Uterus (tissue), 4 donors: ENCODE measurements at regions of chr17 and their contacts with region 1.

Region 1: GRCh38 chr17:11564589-11565380 is 33.5 kb upstream of the DNAH9 start:
- DNase-seq: no peak
- H3K4me3 ChIP-seq: no peak overlapping the region
- H3K27ac ChIP-seq: no peak overlapping the region
- H3K4me1 ChIP-seq: no peaks in the 10 kb centered on the region
- H3K27me3 ChIP-seq: no peaks in the 10 kb centered on the region
- CTCF ChIP-seq: no peak
- POLR2A ChIP-seq: no peak

Region 2: DNA sequence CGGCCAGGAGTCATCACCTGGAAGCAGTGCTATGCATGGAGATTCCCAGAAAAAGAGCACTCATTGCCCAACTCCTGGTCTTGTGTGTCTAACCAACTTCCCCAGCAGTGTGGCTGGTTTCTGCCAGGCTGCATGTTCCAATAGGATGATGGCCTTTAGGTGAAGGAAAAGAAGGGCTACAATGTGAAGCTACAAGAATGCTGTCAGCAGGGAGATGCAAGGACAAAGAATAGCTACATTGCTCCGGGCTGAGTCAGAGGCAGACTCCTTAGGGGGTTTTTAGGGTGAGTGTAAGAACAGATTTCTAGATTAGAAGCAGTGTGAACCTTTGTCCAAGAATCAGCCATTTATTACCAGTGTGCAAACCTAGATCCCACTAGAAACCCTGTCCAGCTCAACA is 29.6 kb before region 1 on chr17:
- intact Hi-C with region 1: no loop called
- DNase-seq: no peak
- H3K4me3 ChIP-seq: no peak overlapping the region
- H3K27ac ChIP-seq: no peak overlapping the region
- H3K4me1 ChIP-seq: no peaks in the 10 kb centered on the region
- H3K27me3 ChIP-seq: no peaks in the 10 kb centered on the region
- CTCF ChIP-seq: no peak
- POLR2A ChIP-seq: no peak

Region 3: DNA sequence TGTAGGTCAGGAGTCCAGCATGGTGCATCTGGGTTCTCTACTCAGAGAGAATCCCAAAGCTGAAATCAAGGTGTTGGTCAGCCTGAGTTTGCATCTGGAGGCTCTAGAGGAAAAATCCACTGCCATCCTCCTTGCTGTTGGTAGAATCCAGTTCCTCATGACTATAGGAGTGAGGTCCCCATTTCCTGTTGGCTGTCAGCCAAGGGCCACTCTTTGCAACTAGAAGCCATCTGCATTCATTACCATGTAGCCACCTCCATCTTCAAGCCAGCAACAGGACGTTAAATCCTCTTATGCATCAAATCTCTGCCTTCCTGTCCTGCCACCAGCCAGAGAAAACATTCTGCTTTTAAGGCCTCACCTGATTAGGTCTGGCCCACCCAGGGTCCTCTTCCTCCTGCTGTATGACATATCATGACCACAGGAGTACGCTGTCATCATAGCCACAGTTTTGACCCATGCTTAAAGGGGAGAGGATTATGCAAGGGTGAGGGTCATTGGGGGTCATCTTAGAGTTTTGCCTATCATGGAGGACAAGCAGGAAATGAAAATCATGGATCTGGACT is 74.0 kb after region 1 on chr17:
- intact Hi-C with region 1: loop called (anchors 10 kb)
- DNase-seq: no peak
- H3K4me3 ChIP-seq: no peak overlapping the region
- H3K27ac ChIP-seq: no peak overlapping the region
- H3K4me1 ChIP-seq: no peaks in the 10 kb centered on the region
- H3K27me3 ChIP-seq: no peaks in the 10 kb centered on the region
- CTCF ChIP-seq: no peak
- POLR2A ChIP-seq: no peak

Region 4: GRCh38 chr17:11925262-11926021 is 360.7 kb after region 1 on chr17:
- intact Hi-C with region 1: no loop called
- DNase-seq: peak in 1 of 2 donors; percentile 48
- H3K4me3 ChIP-seq: no peak overlapping the region
- H3K27ac ChIP-seq: peak overlapping the region in 1 of 2 donors; percentile 41
- H3K4me1 ChIP-seq: no peaks in the 10 kb centered on the region
- H3K27me3 ChIP-seq: no peaks in the 10 kb centered on the region
- CTCF ChIP-seq: no peak
- POLR2A ChIP-seq: no peak